MCF 10A (cell line): ENCODE measurements at regions of chr5 and their contacts with region 1.

Region 1: GRCh38 chr5:14208071-14209021 is 65.2 kb downstream of the TRIO start:
- DNase-seq: peak; percentile 58
- H3K4me3 Mint-ChIP-seq: peak overlapping the region; percentile 55
- H3K27ac Mint-ChIP-seq: peak overlapping the region; percentile 89
- H3K4me1 Mint-ChIP-seq: peaks cover 56% of the 10 kb centered on the region
- H3K27me3 Mint-ChIP-seq: no peaks in the 10 kb centered on the region
- CTCF ChIP-seq: no peak

Region 2: GRCh38 chr5:14223372-14223771 is 15.0 kb after region 1 on chr5:
- CTCF ChIA-PET with region 1: no interaction called
- POLR2A ChIA-PET with region 1: no interaction called
- intact Hi-C with region 1: no loop called
- DNase-seq: no peak
- H3K4me3 Mint-ChIP-seq: no peak overlapping the region
- H3K27ac Mint-ChIP-seq: no peak overlapping the region
- H3K4me1 Mint-ChIP-seq: peaks cover 38% of the 10 kb centered on the region
- H3K27me3 Mint-ChIP-seq: no peaks in the 10 kb centered on the region
- CTCF ChIP-seq: no peak

Region 3: GRCh38 chr5:14264604-14265316 is 56.4 kb after region 1 on chr5:
- CTCF ChIA-PET with region 1: interaction called, 9 read pairs
- POLR2A ChIA-PET with region 1: interaction called, 23 read pairs
- intact Hi-C with region 1: loop called (anchors 2 kb)
- DNase-seq: peak; percentile 93
- H3K4me3 Mint-ChIP-seq: peak overlapping the region; percentile 74
- H3K27ac Mint-ChIP-seq: peak overlapping the region; percentile 52
- H3K4me1 Mint-ChIP-seq: peaks cover 53% of the 10 kb centered on the region
- H3K27me3 Mint-ChIP-seq: no peaks in the 10 kb centered on the region
- CTCF ChIP-seq: no peak

Region 4: GRCh38 chr5:14428302-14429081 is 220.1 kb after region 1 on chr5:
- CTCF ChIA-PET with region 1: no interaction called
- POLR2A ChIA-PET with region 1: no interaction called
- intact Hi-C with region 1: no loop called
- DNase-seq: no peak
- H3K4me3 Mint-ChIP-seq: no peak overlapping the region
- H3K27ac Mint-ChIP-seq: no peak overlapping the region
- H3K4me1 Mint-ChIP-seq: no peaks in the 10 kb centered on the region
- H3K27me3 Mint-ChIP-seq: no peaks in the 10 kb centered on the region
- CTCF ChIP-seq: no peak

Region 5: DNA sequence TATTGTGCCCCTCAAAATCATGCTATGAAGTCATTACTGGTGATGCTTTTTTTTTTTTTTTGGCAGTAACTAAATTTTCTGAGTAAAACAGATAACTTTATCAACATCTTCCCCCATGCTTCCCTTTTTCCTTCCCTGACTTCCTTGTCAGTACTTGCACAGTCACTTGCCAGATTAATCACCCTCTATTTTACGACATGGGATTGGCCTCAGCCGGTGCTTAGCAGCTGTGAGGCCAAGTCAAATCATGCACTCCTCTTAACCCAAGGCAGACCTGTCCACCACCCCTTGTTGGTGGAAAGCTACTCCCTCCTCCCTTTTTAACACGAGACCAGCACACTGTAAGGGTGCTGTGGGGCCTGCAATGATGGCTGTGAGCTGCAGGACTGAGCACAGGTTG is 255.3 kb after region 1 on chr5:
- CTCF ChIA-PET with region 1: no interaction called
- POLR2A ChIA-PET with region 1: no interaction called
- intact Hi-C with region 1: no loop called
- DNase-seq: peak; percentile 23
- H3K4me3 Mint-ChIP-seq: no peak overlapping the region
- H3K27ac Mint-ChIP-seq: no peak overlapping the region
- H3K4me1 Mint-ChIP-seq: peaks cover 6% of the 10 kb centered on the region
- H3K27me3 Mint-ChIP-seq: no peaks in the 10 kb centered on the region
- CTCF ChIP-seq: no peak